ENCODE measurements at regions of chr11 and their contacts with region 1.

Region 1: GRCh38 chr11:69044111-69045013 is 4.4 kb upstream of the TPCN2 start:
- DNase-seq: peak; percentile 80 to 84
- ATAC-seq: peak; percentile 81 to 89
- H3K4me3 ChIP-seq: no peak overlapping the region
- H3K27ac ChIP-seq: peak overlapping the region; percentile 1 to 63; a peak in 3 of 6 replicates
- H3K4me1 ChIP-seq: peaks cover 12% of the 10 kb centered on the region; the same call in 2 of the 3 replicates
- CTCF ChIP-seq: peak; percentile 73
- EP300 ChIP-seq: no peak
- POLR2A ChIP-seq: no peak
- RAD21 ChIP-seq: peak; percentile 65 to 69

Region 2: GRCh38 chr11:69013009-69013951 is 31.1 kb before region 1 on chr11 and contains the start of gene MRGPRF:
- CTCF ChIA-PET with region 1: interaction called, 16 read pairs
- POLR2A ChIA-PET with region 1: no interaction called
- DNase-seq: peak; percentile 30 to 40
- ATAC-seq: 0 out of 6 replicates have a peak, but pooled peaks of 1 of the 2 experiments have one; percentile 4
- H3K4me3 ChIP-seq: no peak within 1 kb of the TSS
- H3K27ac ChIP-seq: no peak within 1 kb of the TSS
- H3K4me1 ChIP-seq: peaks cover 26% of the 10 kb centered on the region
- CTCF ChIP-seq: no peak
- EP300 ChIP-seq: no peak
- POLR2A ChIP-seq: no peak
- RAD21 ChIP-seq: no peak
- polyA plus RNA-seq, gene MRGPRF: not detected in 2 replicates

Region 3: DNA sequence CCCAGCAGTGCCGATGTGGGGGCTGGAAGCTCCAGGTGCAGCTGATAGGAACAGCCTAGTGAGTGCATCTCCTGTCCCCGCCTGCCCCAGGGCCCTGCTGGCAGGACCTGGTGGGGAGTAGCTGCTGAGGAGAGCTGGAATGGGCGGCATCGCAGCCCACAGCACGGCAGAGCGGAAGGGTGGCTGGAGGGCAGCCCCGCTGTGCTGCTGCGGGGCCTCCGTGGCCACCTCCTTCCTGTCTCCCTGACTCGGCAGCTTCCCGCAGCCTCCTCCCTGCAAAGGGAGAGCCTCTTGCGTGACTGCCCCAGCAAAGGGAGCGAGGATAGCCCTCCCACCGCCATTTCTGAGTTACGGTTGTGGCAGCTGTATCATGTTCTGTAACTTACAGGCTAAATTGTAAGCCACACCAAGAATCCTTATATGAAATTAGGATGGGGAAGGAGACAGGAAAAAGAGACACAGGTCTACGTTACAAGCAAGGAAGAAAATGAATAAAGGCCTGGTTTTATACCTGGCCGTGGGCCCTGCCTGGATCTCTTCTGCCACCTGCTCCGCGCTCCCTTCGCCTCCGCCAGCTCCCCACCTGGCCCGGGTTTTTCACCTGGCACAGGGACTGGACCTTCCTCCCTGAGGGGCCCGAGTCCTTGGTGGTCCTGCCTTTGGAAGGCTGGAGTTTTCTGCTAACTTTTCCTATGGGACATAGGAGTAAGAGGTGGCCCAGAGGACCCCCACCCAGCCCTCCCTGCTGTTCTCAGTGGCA is 14.3 kb after region 1 on chr11:
- CTCF ChIA-PET with region 1: interaction called, 10 read pairs
- POLR2A ChIA-PET with region 1: interaction called, 3 read pairs
- DNase-seq: no peak
- ATAC-seq: no peak
- H3K4me3 ChIP-seq: no peak overlapping the region
- H3K27ac ChIP-seq: no peak overlapping the region
- H3K4me1 ChIP-seq: no peaks in the 10 kb centered on the region
- CTCF ChIP-seq: no peak
- EP300 ChIP-seq: no peak
- POLR2A ChIP-seq: no peak
- RAD21 ChIP-seq: no peak

Region 4: DNA sequence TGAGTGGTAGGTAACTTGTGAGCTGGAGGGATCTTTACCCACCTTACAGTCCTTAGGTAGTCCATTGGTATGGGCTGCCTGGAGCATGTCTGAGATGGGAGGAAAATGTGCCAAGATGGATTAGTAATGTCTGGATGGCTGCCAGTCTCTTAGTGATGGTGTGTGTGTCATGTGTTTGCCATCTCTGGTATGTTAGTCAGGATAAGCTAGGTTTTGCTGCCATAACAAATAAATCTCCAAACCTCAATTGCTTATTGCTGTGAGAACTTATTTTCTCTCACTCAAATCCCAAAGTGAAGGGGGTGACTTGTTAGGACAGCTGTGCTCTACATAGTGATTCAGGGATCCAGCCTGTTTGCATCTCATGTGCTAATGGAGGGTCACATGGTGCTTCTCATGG is 208.7 kb after region 1 on chr11:
- CTCF ChIA-PET with region 1: no interaction called
- POLR2A ChIA-PET with region 1: no interaction called
- DNase-seq: peak in 1 of 2 experiments; percentile 49
- ATAC-seq: peak in 1 of 2 experiments; percentile 61; a peak in 3 of 6 replicates
- H3K4me3 ChIP-seq: no peak overlapping the region
- H3K27ac ChIP-seq: no peak overlapping the region
- H3K4me1 ChIP-seq: no peaks in the 10 kb centered on the region
- CTCF ChIP-seq: no peak
- EP300 ChIP-seq: no peak
- POLR2A ChIP-seq: no peak
- RAD21 ChIP-seq: no peak